Ascending aorta (tissue), 2 donors: ENCODE measurements at regions of chrX and their contacts with region 1.

Region 1: DNA sequence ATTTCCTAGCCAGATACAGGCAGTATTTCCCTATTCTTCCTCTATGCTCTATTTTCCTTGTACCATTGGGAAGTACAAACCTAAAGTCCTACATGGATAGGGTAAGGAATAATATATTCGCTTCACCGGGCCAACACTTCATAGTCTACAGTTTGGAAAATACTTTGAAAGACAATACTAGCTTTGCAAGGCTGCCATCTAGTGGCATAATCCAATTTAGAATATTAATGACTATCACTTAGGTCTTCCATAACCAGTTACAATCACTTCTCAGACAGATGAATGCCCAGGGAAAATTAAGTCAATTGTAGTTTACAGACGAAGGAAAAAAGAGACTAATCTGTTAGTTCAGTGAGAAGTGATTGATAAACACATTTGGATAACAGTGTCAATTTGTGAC is 141.0 kb upstream of the FAM47C start:
- DNase-seq: no peak
- H3K4me3 ChIP-seq: no peak overlapping the region
- H3K27ac ChIP-seq: no peak overlapping the region
- H3K4me1 ChIP-seq: no peaks in the 10 kb centered on the region
- H3K27me3 ChIP-seq: no peaks in the 10 kb centered on the region
- CTCF ChIP-seq: peak; percentile 3 to 63 (median 33)

Region 2: GRCh38 chrX:35890699-35891098 is 976.4 kb before region 1 on chrX:
- intact Hi-C with region 1: loop called (anchors 10 kb)
- DNase-seq: no peak
- H3K4me3 ChIP-seq: no peak overlapping the region
- H3K27ac ChIP-seq: no peak overlapping the region
- H3K4me1 ChIP-seq: no peaks in the 10 kb centered on the region
- H3K27me3 ChIP-seq: no peaks in the 10 kb centered on the region
- CTCF ChIP-seq: peak; percentile 28 to 60 (median 50)

Region 3: GRCh38 chrX:36974911-36975310 is 107.8 kb after region 1 on chrX:
- intact Hi-C with region 1: no loop called
- DNase-seq: no peak
- H3K4me3 ChIP-seq: no peak overlapping the region
- H3K27ac ChIP-seq: no peak overlapping the region
- H3K4me1 ChIP-seq: no peaks in the 10 kb centered on the region
- H3K27me3 ChIP-seq: no peaks in the 10 kb centered on the region
- CTCF ChIP-seq: no peak